ENCODE measurements at regions of chr2 and their contacts with region 1.

Region 1: GRCh38 chr2:45821564-45822271 is 170.2 kb downstream of the PRKCE start:
- DNase-seq: peak; percentile 69
- H3K4me3 ChIP-seq: no peak overlapping the region
- H3K27ac ChIP-seq: peak overlapping the region; percentile 1 to 76 (median 65)
- H3K4me1 ChIP-seq: peaks cover 3 to 25% (median 12%) of the 10 kb centered on the region in 4 donors
- H3K27me3 ChIP-seq: no peaks in the 10 kb centered on the region
- CTCF ChIP-seq: no peak
- EP300 ChIP-seq: no peak
- POLR2A ChIP-seq: no peak

Region 2: DNA sequence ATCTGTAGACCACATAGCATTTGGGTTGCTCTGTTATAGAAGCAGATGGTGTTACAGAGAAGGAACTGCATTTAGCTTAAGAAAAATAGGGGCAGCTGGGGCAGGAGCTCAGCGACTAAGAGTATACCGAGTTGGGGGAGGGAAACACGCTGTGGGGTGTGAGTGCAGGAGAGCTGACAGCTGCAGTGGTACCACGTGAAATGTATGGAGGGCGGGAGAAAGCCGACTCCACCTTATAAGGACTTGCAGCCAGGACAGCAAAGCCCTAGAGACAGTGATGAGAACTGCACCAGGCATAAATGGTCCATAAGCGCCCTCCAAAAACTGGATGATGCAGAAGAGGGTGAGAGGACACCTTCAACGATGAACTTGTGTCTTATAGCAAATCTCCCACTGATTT is 67.3 kb after region 1 on chr2:
- in situ Hi-C with region 1: no loop called
- intact Hi-C with region 1: loop called (anchors 10 kb)
- DNase-seq: peak; percentile 32
- H3K4me3 ChIP-seq: no peak overlapping the region
- H3K27ac ChIP-seq: peak overlapping the region in 3 of 4 donors; percentile 23 to 62 (median 36)
- H3K4me1 ChIP-seq: peaks cover 23 to 80% (median 39%) of the 10 kb centered on the region in 4 donors
- H3K27me3 ChIP-seq: no peaks in the 10 kb centered on the region
- CTCF ChIP-seq: peak in 2 of 5 experiments; percentile 20 to 22
- EP300 ChIP-seq: no peak
- POLR2A ChIP-seq: no peak

Measured in transverse colon (tissue), 4 donors.